ENCODE measurements at regions of chr20 and their contacts with region 1.

Region 1: GRCh38 chr20:24917797-24918578 is 31.1 kb upstream of the CST7 start:
- DNase-seq: peak in 1 of 2 experiments; percentile 73
- H3K4me3 ChIP-seq: no peak overlapping the region
- H3K4me3 Mint-ChIP-seq: no peak overlapping the region
- H3K27ac Mint-ChIP-seq: no peak overlapping the region
- H3K4me1 ChIP-seq: peaks cover 6% of the 10 kb centered on the region; the same call in 1 of the 2 replicates
- H3K4me1 Mint-ChIP-seq: no peaks in the 10 kb centered on the region
- H3K27me3 ChIP-seq: no peaks in the 10 kb centered on the region
- H3K27me3 Mint-ChIP-seq: peaks cover 6% of the 10 kb centered on the region
- CTCF ChIP-seq: peak; percentile 91 to 94

Region 2: DNA sequence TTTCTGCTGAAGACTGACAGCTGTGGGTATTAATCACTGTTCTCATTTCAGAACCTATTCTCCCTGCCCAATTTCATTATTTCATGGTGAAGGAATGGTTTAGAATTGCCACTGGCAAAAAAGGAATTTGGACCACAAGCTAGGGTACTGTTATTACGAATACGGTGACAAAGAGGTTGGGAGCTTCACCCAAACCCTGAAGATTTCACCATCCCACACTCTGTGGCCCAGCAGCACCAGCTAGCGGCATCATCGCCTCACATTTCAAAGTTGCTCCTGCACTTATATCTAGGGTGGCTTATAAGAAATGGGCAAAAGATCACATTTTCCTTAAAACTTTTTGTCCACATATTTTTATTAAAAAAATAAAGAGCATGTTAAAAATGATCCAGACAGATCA is 212.5 kb before region 1 on chr20:
- CTCF ChIA-PET with region 1: no interaction called
- POLR2A ChIA-PET with region 1: no interaction called
- intact Hi-C with region 1: loop called (anchors 1 kb)
- DNase-seq: no peak
- H3K4me3 ChIP-seq: no peak overlapping the region
- H3K4me3 Mint-ChIP-seq: no peak overlapping the region
- H3K27ac Mint-ChIP-seq: no peak overlapping the region
- H3K4me1 ChIP-seq: no peaks in the 10 kb centered on the region
- H3K4me1 Mint-ChIP-seq: no peaks in the 10 kb centered on the region
- H3K27me3 ChIP-seq: peaks cover 2% of the 10 kb centered on the region
- H3K27me3 Mint-ChIP-seq: peaks cover 16% of the 10 kb centered on the region
- CTCF ChIP-seq: no peak

Region 3: DNA sequence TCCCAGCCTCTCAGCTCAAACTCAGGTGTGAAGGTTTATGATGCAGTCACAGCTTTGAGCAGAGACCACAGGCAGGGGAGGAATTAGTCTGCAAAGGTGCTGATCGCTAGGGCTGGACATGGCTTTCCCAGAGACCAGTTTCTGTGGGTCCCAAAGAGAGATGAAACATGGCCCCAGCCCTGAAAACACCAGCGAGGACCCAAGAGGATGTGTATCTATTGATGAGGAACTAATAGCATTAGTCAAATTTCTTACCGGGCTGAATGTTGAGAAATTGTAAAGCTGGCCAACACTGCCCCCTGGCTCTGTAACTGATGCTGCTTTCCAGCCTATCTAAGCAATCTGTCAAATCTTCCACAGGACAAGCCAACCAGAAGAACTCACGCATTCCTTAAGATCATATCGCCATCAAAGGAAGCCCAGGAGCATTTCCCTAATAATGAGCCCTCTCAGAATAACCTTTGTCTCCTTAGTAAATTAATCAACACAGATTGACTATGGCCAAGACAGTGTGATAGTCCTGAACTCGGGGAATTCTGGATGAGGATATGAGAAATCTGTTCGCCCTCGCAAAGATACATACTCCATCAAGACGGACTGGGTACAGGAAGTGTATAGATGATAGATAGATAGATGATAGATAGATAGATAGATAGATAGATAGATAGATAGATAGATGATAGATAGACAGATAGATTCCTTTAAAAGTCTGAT is 147.8 kb after region 1 on chr20:
- CTCF ChIA-PET with region 1: no interaction called
- POLR2A ChIA-PET with region 1: no interaction called
- intact Hi-C with region 1: no loop called
- DNase-seq: peak; percentile 73 to 77
- H3K4me3 ChIP-seq: no peak overlapping the region
- H3K4me3 Mint-ChIP-seq: peak overlapping the region; percentile 68
- H3K27ac Mint-ChIP-seq: peak overlapping the region; percentile 56
- H3K4me1 ChIP-seq: peaks cover 34% of the 10 kb centered on the region
- H3K4me1 Mint-ChIP-seq: peaks cover 40% of the 10 kb centered on the region
- H3K27me3 ChIP-seq: no peaks in the 10 kb centered on the region
- H3K27me3 Mint-ChIP-seq: no peaks in the 10 kb centered on the region
- CTCF ChIP-seq: peak; percentile 80 to 91